Esophagus squamous epithelium (tissue), 5 donors: ENCODE measurements at regions of chr1 and their contacts with region 1.

Region 1: DNA sequence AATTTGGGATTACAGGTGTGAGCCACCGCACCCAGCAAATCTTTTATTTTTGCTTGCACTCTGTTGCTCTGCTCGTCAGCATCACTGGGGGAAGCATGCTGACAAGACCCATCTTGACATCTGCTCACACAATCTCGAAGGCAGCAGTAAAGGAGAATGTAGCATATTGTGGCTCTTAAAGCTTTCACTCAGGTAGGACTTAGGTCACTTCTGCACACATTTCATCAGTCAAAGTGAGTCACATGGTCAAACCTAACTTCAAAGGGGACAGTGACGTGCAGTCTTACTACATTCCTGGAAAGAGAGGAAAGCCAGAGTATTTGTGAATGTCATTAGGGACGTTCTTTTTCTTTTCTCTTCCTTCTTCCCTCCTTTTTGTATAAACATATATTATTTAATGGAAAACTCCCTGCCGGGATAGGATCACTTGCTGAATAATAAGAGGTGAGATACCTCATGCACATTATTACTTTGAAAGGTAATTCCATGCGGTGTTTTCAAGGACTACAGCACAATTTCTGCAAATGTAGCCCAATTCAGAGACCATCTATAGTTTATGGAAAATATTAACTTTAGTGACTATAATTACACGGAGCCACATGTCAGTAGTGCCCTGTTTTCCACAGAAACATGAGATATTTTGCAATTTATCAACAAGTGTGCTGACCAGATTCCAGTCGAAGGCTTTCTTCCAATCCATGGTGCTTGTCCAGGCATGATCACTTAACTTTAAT is 19.3 kb upstream of the ACBD6 start:
- DNase-seq: no peak
- H3K4me3 ChIP-seq: no peak overlapping the region
- H3K27ac ChIP-seq: peak overlapping the region in 3 of 4 donors; percentile 17 to 35 (median 23)
- H3K4me1 ChIP-seq: peaks cover 0 to 31% (median 6%) of the 10 kb centered on the region in 3 donors
- H3K27me3 ChIP-seq: no peaks in the 10 kb centered on the region
- CTCF ChIP-seq: no peak
- POLR2A ChIP-seq: no peak

Region 2: DNA sequence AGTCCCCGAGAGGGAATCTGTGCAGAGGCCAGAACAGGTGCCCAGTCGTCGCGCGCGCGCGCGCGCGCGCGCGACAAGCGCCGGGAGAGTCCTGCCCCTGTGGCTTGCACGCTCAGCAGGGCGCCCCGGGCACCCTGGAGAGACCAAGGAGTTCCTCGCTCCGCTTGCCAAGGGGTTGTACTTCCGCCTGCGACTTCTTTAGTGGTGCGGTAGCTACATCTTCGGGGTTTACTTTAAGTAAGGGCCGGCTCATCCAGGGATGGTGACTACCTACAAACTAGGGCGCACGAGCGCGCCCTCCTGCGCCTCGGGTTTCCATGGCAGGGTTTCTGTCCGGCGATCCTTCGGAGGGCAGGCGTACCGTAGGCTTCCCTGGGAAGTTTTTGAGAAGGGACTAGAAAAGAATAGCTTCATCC is 290.1 kb before region 1 on chr1:
- intact Hi-C with region 1: no loop called
- DNase-seq: no peak
- H3K4me3 ChIP-seq: peak overlapping the region; percentile 43 to 70 (median 55)
- H3K27ac ChIP-seq: no peak overlapping the region
- H3K4me1 ChIP-seq: peaks cover 49 to 77% (median 57%) of the 10 kb centered on the region in 3 donors
- H3K27me3 ChIP-seq: peaks cover 50 to 100% (median 73%) of the 10 kb centered on the region in 4 donors
- CTCF ChIP-seq: no peak
- POLR2A ChIP-seq: no peak

Region 3: DNA sequence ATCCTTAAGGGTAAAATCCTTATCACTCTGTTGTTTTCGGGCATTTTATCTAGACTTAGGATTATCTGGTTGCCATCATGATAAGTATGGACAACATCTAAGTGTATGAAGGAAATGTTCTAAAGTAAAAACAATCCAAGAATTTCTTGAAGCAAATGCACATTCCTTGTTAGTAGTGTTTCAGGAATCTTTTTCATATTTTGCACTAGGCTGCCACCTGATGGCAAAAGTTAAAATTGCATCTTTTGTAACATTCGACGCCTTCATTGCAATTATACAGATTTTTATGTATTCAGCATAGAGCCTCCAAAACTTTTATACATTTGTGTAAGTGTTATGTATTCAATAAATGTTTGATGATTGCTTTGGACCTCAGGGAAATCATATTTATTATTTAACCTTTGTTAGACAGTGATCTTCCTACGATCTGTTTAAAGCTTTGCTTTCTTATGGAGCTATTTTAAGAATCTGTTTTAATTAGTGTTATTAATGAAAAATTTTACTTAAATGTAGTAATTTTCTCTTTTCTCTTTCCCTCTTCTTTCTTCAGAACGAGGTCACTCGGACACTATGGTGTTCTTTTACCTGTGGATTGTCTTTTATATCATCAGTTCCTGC is 341.6 kb after region 1 on chr1:
- intact Hi-C with region 1: loop called (anchors 5 kb)
- DNase-seq: no peak
- H3K4me3 ChIP-seq: no peak overlapping the region
- H3K27ac ChIP-seq: no peak overlapping the region
- H3K4me1 ChIP-seq: no peaks in the 10 kb centered on the region
- H3K27me3 ChIP-seq: no peaks in the 10 kb centered on the region
- CTCF ChIP-seq: peak; percentile 47 to 81 (median 68)
- POLR2A ChIP-seq: no peak

Region 4: GRCh38 chr1:181021811-181022434 is 500.3 kb after region 1 on chr1:
- intact Hi-C with region 1: loop called (anchors 5 kb)
- DNase-seq: no peak
- H3K4me3 ChIP-seq: peak overlapping the region; percentile 72 to 97 (median 85)
- H3K27ac ChIP-seq: peak overlapping the region; percentile 94 to 96 (median 95)
- H3K4me1 ChIP-seq: peaks cover 0 to 48% (median 12%) of the 10 kb centered on the region in 3 donors
- H3K27me3 ChIP-seq: no peaks in the 10 kb centered on the region
- CTCF ChIP-seq: no peak
- POLR2A ChIP-seq: peak in 1 of 4 donors; percentile 4